ENCODE measurements at regions of chr13 and their contacts with region 1.

Region 1: DNA sequence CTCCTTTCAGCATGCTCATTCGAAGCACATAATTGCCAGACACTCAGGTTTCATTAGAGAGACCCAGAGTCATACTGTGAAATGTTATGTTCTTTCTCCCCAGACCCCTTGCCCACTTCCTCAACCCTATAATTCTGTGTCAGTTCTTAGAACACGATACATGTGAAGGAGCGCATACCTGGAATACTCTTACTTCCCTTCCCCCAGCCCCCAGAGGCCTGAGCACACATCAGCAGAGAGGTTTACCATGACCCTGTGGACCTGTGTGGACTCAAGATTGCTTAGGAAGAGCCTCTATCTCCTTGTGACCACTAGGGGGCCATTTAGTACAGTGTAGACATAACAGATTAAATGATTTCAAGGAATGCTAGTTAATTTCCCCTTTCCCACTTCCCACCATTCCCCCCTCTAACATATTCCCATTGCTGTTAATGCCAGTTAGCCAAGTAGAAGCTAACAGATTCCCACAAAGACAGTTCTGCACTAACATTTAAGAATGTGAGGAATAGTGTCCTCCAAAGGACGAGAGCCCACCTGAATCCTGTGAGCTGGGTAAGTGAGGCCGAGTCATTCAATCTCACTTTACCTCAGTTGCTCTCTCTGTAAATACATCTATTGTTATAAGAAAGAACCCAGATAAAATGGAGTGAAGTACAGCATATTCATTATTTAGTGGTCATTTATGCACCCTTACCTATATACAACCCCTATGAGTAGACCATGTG is 154.2 kb upstream of the MAB21L1 start:
- DNase-seq: no peak
- ATAC-seq: peak; percentile 83

Region 2: GRCh38 chr13:35349673-35350278 is 280.9 kb before region 1 on chr13:
- intact Hi-C with region 1: no loop called
- DNase-seq: no peak
- ATAC-seq: peak; percentile 90

Region 3: GRCh38 chr13:35699805-35700510 is 69.2 kb after region 1 on chr13:
- intact Hi-C with region 1: no loop called
- DNase-seq: peak; percentile 59
- ATAC-seq: peak; percentile 34

Region 4: DNA sequence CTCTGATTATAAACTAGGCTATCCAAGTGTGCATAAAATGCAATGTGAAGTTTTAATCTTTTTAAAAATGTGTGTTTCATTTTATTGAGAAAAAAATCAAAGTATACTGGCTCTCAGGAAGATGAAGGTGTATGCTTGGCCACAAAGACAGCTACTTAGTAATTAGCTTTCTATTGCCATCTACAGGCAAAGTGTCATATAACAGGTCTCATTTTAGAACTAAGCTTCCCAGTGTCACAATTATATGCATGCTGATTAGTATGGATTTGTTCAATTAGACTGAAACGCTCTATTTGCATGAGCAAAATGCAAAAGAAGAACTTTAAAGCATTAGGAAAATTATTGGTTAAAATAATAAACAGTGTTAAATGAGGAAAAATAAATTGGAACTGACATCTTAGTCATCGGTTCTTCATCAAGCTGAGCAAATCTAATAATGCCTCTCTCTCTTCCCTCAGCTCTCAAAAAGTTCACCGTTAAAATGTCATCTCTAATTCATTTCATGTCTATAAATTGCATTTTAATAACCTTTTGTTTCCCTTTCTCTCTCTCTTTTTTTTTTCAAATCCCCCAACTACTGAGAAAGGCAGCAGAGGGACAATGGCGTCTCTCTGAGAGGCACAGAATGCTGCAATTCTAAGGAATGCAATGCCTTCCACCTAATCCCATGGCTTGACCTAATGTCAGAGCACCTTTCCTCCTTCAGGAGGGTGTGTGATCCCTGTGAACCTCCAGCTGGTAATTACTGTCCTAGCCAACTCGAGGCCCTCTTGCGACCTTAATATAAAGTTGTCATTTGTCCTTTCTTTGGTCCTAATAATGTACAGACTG is 158.8 kb after region 1 on chr13:
- intact Hi-C with region 1: loop called (anchors 10 kb)
- DNase-seq: no peak
- ATAC-seq: peak; percentile 65

Measured in left ventricle myocardium superior (tissue), 1 donor.